T-cell (primary cell): ENCODE measurements at regions of chr1 and their contacts with region 1.

Region 1: GRCh38 chr1:8702850-8703810 is 114.3 kb downstream of the RERE start:
- DNase-seq: peak in 33 of 35 experiments; percentile 1 to 63 (median 31)
- ATAC-seq: peak in 3 of 4 experiments; percentile 38 to 51 (median 50)
- H3K4me3 ChIP-seq: peak overlapping the region; percentile 15 to 74
- H3K4me3 Mint-ChIP-seq: peak overlapping the region; percentile 72 to 85 (median 85)
- H3K27ac ChIP-seq: no peak overlapping the region
- H3K27ac Mint-ChIP-seq: peak overlapping the region in 1 of 2 donors; percentile 37
- H3K4me1 ChIP-seq: peaks cover 20 to 26% of the 10 kb centered on the region in 2 experiments
- H3K4me1 Mint-ChIP-seq: peaks cover 28 to 37% (median 31%) of the 10 kb centered on the region in 3 donors
- H3K27me3 ChIP-seq: peaks cover 0 to 18% of the 10 kb centered on the region in 2 experiments
- H3K27me3 Mint-ChIP-seq: peaks cover 40% of the 10 kb centered on the region in 2 donors

Region 2: DNA sequence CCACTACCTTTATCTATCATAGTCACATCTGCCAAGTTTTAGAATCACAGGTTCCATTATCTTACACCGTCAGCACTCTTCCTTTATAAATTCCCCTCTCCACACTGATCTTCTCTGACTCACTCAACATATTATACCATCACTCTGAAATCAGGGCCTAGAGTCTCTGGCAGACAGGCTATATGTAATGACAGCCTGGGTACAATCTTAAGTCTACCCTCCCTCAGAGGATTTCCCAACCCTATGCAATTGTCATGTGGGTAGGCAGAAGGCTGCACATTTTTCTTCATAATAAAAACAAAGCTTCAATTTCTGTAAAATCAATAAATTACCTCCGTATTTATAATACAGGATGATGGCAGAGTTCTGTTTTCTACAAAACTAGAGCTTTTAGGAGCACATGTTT is 23.7 kb before region 1 on chr1:
- CTCF ChIA-PET with region 1: interaction called in 1 of 2 experiments, 3 read pairs
- POLR2A ChIA-PET with region 1: interaction called, 4 to 10 read pairs
- DNase-seq: no peak
- ATAC-seq: no peak
- H3K4me3 ChIP-seq: no peak overlapping the region
- H3K4me3 Mint-ChIP-seq: no peak overlapping the region
- H3K27ac ChIP-seq: no peak overlapping the region
- H3K27ac Mint-ChIP-seq: no peak overlapping the region
- H3K4me1 ChIP-seq: no peaks in the 10 kb centered on the region
- H3K4me1 Mint-ChIP-seq: peaks cover 5 to 14% (median 7%) of the 10 kb centered on the region in 3 donors
- H3K27me3 ChIP-seq: no peaks in the 10 kb centered on the region
- H3K27me3 Mint-ChIP-seq: no peaks in the 10 kb centered on the region

Region 3: DNA sequence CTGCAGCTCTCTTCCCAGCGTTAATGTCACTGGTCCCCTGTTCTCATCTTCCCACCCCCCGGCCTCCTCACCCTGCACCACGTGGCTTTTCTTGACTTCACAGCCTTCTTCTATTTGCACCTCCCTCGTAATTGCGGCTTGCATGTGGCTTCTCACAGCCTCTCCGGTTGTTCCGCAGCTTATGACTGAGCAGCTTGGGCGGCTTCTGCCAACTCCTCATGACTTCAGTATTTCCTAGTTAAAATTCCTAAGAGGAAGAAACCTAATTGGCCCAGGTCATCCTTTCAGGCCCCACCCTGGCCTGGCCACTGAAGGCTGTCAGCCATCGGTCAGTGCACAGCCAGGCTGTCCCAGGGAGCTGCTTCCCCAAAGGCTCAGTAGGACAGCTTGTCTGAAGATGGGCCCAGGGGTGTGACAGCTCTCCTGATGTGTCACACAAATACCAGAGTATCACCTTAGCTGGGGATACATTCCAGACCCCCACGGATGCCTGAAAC is 122.9 kb after region 1 on chr1:
- CTCF ChIA-PET with region 1: no interaction called
- POLR2A ChIA-PET with region 1: no interaction called
- DNase-seq: peak in 3 of 35 experiments; percentile 14 to 45 (median 25)
- ATAC-seq: no peak
- H3K4me3 ChIP-seq: no peak overlapping the region
- H3K4me3 Mint-ChIP-seq: no peak overlapping the region
- H3K27ac ChIP-seq: no peak overlapping the region
- H3K27ac Mint-ChIP-seq: no peak overlapping the region
- H3K4me1 ChIP-seq: peaks cover 3 to 12% of the 10 kb centered on the region in 2 experiments
- H3K4me1 Mint-ChIP-seq: peaks cover 9 to 18% (median 15%) of the 10 kb centered on the region in 3 donors
- H3K27me3 ChIP-seq: no peaks in the 10 kb centered on the region
- H3K27me3 Mint-ChIP-seq: peaks cover 7% of the 10 kb centered on the region in 2 donors